Heart right ventricle (tissue), 16 donors: ENCODE measurements at regions of chr3 and their contacts with region 1.

Region 1: GRCh38 chr3:14791343-14791945 is 27.3 kb upstream of the FGD5 start:
- DNase-seq: peak; percentile 66 to 79
- ATAC-seq: peak; percentile 54 to 72 (median 62)
- H3K4me3 ChIP-seq: no peak overlapping the region
- H3K27ac ChIP-seq: peak overlapping the region in 2 of 10 donors; percentile 56 to 65
- H3K4me1 ChIP-seq: peaks cover 14 to 50% (median 35%) of the 10 kb centered on the region in 9 donors
- H3K27me3 ChIP-seq: peaks cover 0 to 26% (median 0%) of the 10 kb centered on the region in 7 donors
- CTCF ChIP-seq: peak; percentile 54 to 83 (median 77)

Region 2: DNA sequence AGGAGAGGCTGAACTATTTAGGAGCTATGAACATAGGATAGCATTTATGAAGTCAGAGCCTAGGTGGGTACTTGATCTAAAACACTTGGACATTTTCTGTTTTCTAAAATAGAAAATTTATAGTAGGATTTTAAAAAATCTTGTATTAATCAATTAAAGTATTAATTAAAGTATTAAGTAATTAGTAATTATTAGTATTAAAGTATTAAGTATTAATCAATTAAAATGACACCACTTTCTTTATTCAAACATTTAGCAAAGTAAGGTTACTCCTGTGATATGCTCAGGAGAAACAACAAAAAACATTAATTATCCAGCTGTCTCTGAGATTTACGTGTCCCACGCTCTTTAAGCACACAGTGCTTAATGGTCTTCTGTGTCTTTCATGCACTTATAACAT is 699.0 kb before region 1 on chr3:
- intact Hi-C with region 1: no loop called
- DNase-seq: no peak
- ATAC-seq: no peak
- H3K4me3 ChIP-seq: no peak overlapping the region
- H3K27ac ChIP-seq: no peak overlapping the region
- H3K4me1 ChIP-seq: no peaks in the 10 kb centered on the region
- H3K27me3 ChIP-seq: peaks cover 0 to 20% (median 4%) of the 10 kb centered on the region in 7 donors
- CTCF ChIP-seq: no peak

Region 3: DNA sequence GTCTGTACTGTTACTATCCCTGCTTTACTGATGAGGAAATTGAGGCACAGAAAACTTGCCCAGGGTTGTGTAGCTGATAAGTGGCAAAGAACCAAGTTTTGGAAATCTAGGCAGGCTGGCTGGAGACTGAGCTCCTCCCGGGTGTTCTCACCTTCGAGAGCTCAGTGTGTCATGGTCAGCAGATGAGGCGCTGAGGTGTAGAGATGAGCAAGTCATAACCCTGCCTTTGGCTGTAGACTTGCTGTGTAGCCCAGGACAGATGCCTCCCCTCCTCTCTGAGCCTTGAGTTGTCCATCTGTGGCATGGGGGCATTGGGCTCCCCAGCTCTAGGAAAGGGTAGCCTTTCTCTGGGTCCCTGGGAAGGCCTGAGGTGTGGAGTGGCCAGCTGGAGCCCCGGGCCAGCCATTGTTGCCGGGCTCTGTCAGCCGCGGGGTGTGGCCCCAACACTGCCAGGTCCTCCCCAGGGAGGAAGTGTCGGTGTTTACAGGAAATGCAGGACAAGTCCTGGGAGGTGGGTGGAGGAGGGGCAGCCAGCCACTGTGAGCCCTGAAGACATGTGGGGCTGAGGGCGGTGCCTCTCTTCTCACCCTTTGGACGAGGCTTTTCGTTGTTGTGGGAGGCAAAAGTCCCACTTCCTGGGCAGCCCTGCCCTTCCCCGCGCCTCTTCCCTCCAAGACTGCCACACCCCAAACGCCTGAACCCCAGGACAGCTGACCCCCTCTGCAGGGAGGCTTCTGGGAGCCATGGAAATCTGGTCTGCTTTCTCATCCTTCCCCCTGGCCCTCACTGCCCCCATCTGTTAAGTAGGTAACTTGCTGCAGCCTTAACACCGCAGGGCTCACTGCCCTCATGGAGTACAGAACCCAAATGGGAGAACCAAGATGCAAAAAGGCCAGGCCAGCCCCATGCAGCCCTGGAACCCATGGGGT is 56.4 kb after region 1 on chr3:
- intact Hi-C with region 1: loop called in 1 of 10 experiments (anchors 10 kb)
- DNase-seq: peak; percentile 74 to 84
- ATAC-seq: peak; percentile 73 to 93 (median 86)
- H3K4me3 ChIP-seq: no peak overlapping the region
- H3K27ac ChIP-seq: peak overlapping the region; percentile 20 to 86 (median 68)
- H3K4me1 ChIP-seq: peaks cover 17 to 82% (median 52%) of the 10 kb centered on the region in 9 donors
- H3K27me3 ChIP-seq: peaks cover 0 to 8% (median 0%) of the 10 kb centered on the region in 7 donors
- CTCF ChIP-seq: peak in 1 of 9 donors; percentile 19

Region 4: GRCh38 chr3:14915636-14916222 is 124.3 kb after region 1 on chr3:
- intact Hi-C with region 1: loop called in 7 of 10 experiments (anchors 2 to 5 kb)
- DNase-seq: no peak
- ATAC-seq: peak in 3 of 8 donors; percentile 10 to 34 (median 17)
- H3K4me3 ChIP-seq: no peak overlapping the region
- H3K27ac ChIP-seq: no peak overlapping the region
- H3K4me1 ChIP-seq: peaks cover 0 to 10% (median 2%) of the 10 kb centered on the region in 9 donors
- H3K27me3 ChIP-seq: peaks cover 0 to 4% (median 0%) of the 10 kb centered on the region in 7 donors
- CTCF ChIP-seq: peak in 5 of 9 donors; percentile 20 to 34 (median 25)

Region 5: DNA sequence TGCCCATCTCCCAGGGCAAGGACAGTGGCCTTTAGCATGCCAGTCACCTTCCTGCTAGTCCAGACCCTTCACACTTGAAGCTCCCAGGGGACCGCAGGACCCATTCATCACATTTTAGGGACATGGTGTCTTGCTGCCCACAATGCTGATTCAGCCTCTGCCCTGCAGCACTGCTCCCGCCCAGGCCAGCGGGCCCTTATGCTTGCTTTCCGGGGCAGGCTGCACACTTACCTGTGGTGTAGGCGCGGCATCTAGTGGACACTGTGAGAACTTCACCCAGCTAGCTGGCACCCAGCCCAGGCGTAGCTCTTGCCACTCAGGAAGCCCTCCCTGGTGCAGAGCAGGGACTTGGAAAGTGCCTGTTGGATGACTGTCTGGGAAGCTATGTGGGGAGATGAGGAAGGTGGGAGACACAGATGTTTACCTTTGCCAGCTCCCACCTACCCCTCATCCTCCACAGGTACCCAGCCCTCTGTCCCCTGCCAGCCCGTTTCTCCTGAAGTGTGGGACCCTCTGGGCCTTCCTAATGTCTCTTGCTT is 129.7 kb after region 1 on chr3:
- intact Hi-C with region 1: loop called (anchors 1 to 5 kb)
- DNase-seq: peak; percentile 89 to 90
- ATAC-seq: peak; percentile 88 to 95 (median 92)
- H3K4me3 ChIP-seq: no peak overlapping the region
- H3K27ac ChIP-seq: peak overlapping the region in 1 of 10 donors; percentile 15
- H3K4me1 ChIP-seq: peaks cover 0 to 14% (median 10%) of the 10 kb centered on the region in 9 donors
- H3K27me3 ChIP-seq: peaks cover 0 to 4% (median 0%) of the 10 kb centered on the region in 7 donors
- CTCF ChIP-seq: peak; percentile 94 to 99 (median 98)

Region 6: GRCh38 chr3:14947886-14948555 is 156.6 kb after region 1 on chr3:
- intact Hi-C with region 1: no loop called
- DNase-seq: peak; percentile 97
- ATAC-seq: peak; percentile 96 to 99 (median 98)
- H3K4me3 ChIP-seq: peak overlapping the region; percentile 74 to 96 (median 86)
- H3K27ac ChIP-seq: peak overlapping the region; percentile 96 to 100 (median 99)
- H3K4me1 ChIP-seq: peaks cover 11 to 55% (median 35%) of the 10 kb centered on the region in 9 donors
- H3K27me3 ChIP-seq: no peaks in the 10 kb centered on the region
- CTCF ChIP-seq: peak in 2 of 9 donors; percentile 6 to 13